ENCODE measurements at regions of chrX and their contacts with region 1.

Region 1: GRCh38 chrX:114959729-114960128 is 57.7 kb downstream of the IL13RA2 start:
- DNase-seq: peak; percentile 1
- ATAC-seq: no peak
- H3K4me3 ChIP-seq: no peak overlapping the region
- H3K27ac ChIP-seq: no peak overlapping the region
- H3K4me1 ChIP-seq: no peaks in the 10 kb centered on the region
- H3K27me3 ChIP-seq: no peaks in the 10 kb centered on the region
- CTCF ChIP-seq: peak; percentile 8; the same call in 1 of the 2 replicates

Region 2: GRCh38 chrX:114050075-114050796 is 909.5 kb before region 1 on chrX:
- CTCF ChIA-PET with region 1: interaction called, 12 read pairs
- POLR2A ChIA-PET with region 1: no interaction called
- in situ Hi-C with region 1: no loop called
- intact Hi-C with region 1: no loop called
- DNase-seq: no peak
- ATAC-seq: no peak
- H3K4me3 ChIP-seq: no peak overlapping the region
- H3K27ac ChIP-seq: no peak overlapping the region
- H3K4me1 ChIP-seq: no peaks in the 10 kb centered on the region
- H3K27me3 ChIP-seq: no peaks in the 10 kb centered on the region
- CTCF ChIP-seq: no peak

Region 3: GRCh38 chrX:114611018-114611619 is 348.6 kb before region 1 on chrX:
- CTCF ChIA-PET with region 1: interaction called, 3 read pairs
- POLR2A ChIA-PET with region 1: no interaction called
- in situ Hi-C with region 1: no loop called
- intact Hi-C with region 1: loop called (anchors 5 kb)
- DNase-seq: peak; percentile 28
- ATAC-seq: peak; percentile 65; the same call in 1 of the 2 replicates
- H3K4me3 ChIP-seq: no peak overlapping the region
- H3K27ac ChIP-seq: no peak overlapping the region
- H3K4me1 ChIP-seq: no peaks in the 10 kb centered on the region
- H3K27me3 ChIP-seq: no peaks in the 10 kb centered on the region
- CTCF ChIP-seq: peak; percentile 80

Region 4: GRCh38 chrX:114626323-114626722 is 333.4 kb before region 1 on chrX:
- CTCF ChIA-PET with region 1: interaction called, 4 read pairs
- POLR2A ChIA-PET with region 1: no interaction called
- in situ Hi-C with region 1: no loop called
- intact Hi-C with region 1: loop called (anchors 5 kb)
- DNase-seq: no peak
- ATAC-seq: no peak
- H3K4me3 ChIP-seq: no peak overlapping the region
- H3K27ac ChIP-seq: no peak overlapping the region
- H3K4me1 ChIP-seq: no peaks in the 10 kb centered on the region
- H3K27me3 ChIP-seq: no peaks in the 10 kb centered on the region
- CTCF ChIP-seq: peak; percentile 48; the same call in 1 of the 2 replicates

Region 5: DNA sequence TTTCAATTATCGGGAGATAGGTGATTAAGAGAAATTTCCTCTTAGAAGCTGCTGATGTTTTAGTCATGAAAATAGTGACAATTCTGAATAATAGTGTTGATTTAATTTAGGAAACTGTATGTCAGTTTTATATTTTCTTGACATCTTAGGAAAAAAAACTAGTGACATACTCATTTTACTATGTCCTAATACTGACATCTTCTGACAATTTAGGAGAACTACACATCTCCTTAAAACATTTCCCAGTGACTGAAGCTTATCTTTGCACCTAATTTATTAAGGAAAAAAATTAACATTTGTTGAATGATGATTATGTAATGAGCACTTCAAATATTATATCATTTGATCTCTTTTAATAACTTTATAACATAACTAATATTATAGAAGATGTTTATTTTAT is 187.5 kb after region 1 on chrX:
- CTCF ChIA-PET with region 1: no interaction called
- POLR2A ChIA-PET with region 1: no interaction called
- in situ Hi-C with region 1: no loop called
- intact Hi-C with region 1: loop called (anchors 10 kb)
- DNase-seq: no peak
- ATAC-seq: no peak
- H3K4me3 ChIP-seq: no peak overlapping the region
- H3K27ac ChIP-seq: no peak overlapping the region
- H3K4me1 ChIP-seq: no peaks in the 10 kb centered on the region
- H3K27me3 ChIP-seq: no peaks in the 10 kb centered on the region
- CTCF ChIP-seq: peak; percentile 39; the same call in 1 of the 2 replicates

Measured in Panc1 (cell line).